Calu3 (cell line): ENCODE measurements at regions of chr5 and their contacts with region 1.

Region 1: GRCh38 chr5:16736158-16736995 is 119.6 kb upstream of the RETREG1 start:
- DNase-seq: peak; percentile 87
- H3K4me3 Mint-ChIP-seq: peak overlapping the region; percentile 75
- H3K27ac Mint-ChIP-seq: peak overlapping the region; percentile 100
- H3K4me1 Mint-ChIP-seq: peaks cover 45% of the 10 kb centered on the region
- H3K27me3 Mint-ChIP-seq: no peaks in the 10 kb centered on the region
- CTCF ChIP-seq: no peak

Region 2: GRCh38 chr5:16690243-16690852 is 46.0 kb before region 1 on chr5:
- CTCF ChIA-PET with region 1: no interaction called
- intact Hi-C with region 1: loop called (anchors 1 kb)
- DNase-seq: peak; percentile 73
- H3K4me3 Mint-ChIP-seq: no peak overlapping the region
- H3K27ac Mint-ChIP-seq: peak overlapping the region; percentile 30
- H3K4me1 Mint-ChIP-seq: no peaks in the 10 kb centered on the region
- H3K27me3 Mint-ChIP-seq: no peaks in the 10 kb centered on the region
- CTCF ChIP-seq: peak; percentile 82

Region 3: DNA sequence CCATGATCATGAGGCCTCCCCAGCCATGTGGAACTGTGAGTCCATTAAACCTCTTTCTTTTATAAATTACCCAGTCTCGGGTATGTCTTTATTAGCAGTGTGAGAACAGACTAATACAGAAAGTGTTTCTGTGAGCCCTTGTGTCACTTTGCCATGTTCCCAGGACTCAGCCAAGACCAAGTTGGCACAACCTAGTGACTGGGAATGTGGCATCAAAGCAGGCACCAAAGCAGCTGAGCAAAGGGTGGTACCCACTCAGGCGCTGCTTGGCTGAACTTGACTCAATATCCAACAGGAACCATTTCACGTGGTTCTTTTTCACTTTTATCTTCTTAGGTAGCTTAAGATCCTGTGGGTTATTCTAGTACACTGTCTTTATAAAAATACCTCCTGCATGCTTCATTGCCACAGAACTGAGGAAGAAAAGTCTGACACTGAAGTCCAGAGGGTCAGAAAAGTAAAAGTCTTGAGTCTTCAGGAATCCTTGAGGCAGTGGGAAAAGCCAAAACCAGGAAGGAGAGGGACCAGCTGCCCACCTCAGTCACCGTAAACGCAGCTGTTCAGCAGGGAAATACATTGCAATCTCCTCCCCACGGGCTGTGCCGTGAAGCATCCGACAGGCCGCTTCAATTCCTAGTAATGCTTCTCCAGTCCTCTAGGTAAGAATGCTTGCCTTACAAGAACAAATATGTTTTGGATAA is 29.1 kb before region 1 on chr5:
- CTCF ChIA-PET with region 1: no interaction called
- intact Hi-C with region 1: no loop called
- DNase-seq: no peak
- H3K4me3 Mint-ChIP-seq: no peak overlapping the region
- H3K27ac Mint-ChIP-seq: no peak overlapping the region
- H3K4me1 Mint-ChIP-seq: no peaks in the 10 kb centered on the region
- H3K27me3 Mint-ChIP-seq: no peaks in the 10 kb centered on the region
- CTCF ChIP-seq: no peak

Region 4: DNA sequence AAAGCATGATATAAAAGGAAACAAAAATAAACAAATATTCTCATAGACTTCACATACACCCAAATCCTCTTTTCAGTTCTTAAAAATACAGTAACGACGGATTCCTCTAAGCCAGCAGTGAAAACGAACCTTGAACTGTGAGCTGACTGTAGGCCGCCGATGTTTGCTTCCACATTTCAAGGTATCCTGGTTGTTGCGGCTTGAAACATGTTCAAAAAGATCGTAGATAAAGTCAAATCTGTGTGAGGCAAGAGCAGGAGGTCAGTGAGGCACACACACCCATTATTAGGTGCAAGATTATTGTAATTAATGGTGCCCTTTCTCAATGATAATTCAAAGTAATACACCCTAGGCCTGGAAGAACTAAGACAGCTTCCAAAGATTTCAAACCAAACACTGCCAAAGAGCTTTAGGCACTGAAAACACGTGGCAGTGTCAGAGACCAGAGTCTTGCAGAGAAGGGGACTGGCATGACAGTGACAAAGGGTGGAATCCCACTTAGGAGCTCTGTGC is 21.7 kb after region 1 on chr5:
- CTCF ChIA-PET with region 1: interaction called, 10 read pairs
- intact Hi-C with region 1: no loop called
- DNase-seq: no peak
- H3K4me3 Mint-ChIP-seq: no peak overlapping the region
- H3K27ac Mint-ChIP-seq: no peak overlapping the region
- H3K4me1 Mint-ChIP-seq: no peaks in the 10 kb centered on the region
- H3K27me3 Mint-ChIP-seq: no peaks in the 10 kb centered on the region
- CTCF ChIP-seq: no peak

Region 5: DNA sequence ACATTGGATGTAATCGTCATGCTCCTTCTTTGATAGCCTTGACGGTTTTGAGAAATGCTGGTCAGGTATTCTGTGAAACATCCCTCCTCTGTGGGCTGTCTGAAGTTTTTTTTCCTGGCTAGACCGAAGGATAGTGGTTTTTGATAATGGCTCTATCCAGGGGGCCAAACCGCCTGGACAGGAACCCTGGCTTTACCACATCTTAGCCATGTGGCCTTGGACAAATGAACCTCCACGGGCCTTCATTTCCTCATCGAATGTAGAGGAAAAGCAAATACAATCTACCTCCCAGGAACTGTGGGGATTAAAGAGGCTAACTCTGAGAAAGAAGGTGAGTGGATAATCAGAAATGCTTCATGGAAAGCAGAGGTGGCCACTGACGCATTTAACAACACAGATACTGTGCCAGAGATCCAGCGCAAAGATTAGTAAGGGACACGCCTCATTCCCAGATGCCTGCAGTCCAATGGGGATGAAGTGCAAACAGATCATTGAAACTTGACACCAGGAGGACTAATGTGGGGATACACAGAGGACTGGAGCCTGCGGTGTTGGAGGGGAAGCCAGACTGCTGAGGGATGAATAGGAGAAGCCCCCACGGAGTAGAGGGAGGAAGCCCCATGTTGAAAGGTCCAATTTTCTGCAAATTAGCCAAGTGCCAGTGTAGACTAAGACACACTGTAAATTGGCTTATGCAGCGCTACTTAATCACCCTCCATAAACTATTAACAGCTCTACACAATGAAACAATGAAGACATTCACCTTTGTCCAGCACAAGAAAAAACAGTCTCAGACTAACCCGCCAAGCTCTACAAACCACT is 158.1 kb after region 1 on chr5:
- CTCF ChIA-PET with region 1: no interaction called
- intact Hi-C with region 1: loop called (anchors 5 kb)
- DNase-seq: peak; percentile 75
- H3K4me3 Mint-ChIP-seq: peak overlapping the region; percentile 63
- H3K27ac Mint-ChIP-seq: peak overlapping the region; percentile 95
- H3K4me1 Mint-ChIP-seq: peaks cover 79% of the 10 kb centered on the region
- H3K27me3 Mint-ChIP-seq: no peaks in the 10 kb centered on the region
- CTCF ChIP-seq: no peak